Activated T-helper 1 cell treated with anti-CD3 and anti-CD28 coated beads, Interleukin-12 subunit alpha, Interleukin-12 subunit beta, Interleukin-2, Interleukin-4 antibody, amounts not matched to agents 30 ng/mL and 10 ng/mL and 1 ng/mL, durations not matched to agents 14 hours and 24 hours and 36 hours (primary cell): ENCODE measurements at regions of chr3 and their contacts with region 1.

Region 1: DNA sequence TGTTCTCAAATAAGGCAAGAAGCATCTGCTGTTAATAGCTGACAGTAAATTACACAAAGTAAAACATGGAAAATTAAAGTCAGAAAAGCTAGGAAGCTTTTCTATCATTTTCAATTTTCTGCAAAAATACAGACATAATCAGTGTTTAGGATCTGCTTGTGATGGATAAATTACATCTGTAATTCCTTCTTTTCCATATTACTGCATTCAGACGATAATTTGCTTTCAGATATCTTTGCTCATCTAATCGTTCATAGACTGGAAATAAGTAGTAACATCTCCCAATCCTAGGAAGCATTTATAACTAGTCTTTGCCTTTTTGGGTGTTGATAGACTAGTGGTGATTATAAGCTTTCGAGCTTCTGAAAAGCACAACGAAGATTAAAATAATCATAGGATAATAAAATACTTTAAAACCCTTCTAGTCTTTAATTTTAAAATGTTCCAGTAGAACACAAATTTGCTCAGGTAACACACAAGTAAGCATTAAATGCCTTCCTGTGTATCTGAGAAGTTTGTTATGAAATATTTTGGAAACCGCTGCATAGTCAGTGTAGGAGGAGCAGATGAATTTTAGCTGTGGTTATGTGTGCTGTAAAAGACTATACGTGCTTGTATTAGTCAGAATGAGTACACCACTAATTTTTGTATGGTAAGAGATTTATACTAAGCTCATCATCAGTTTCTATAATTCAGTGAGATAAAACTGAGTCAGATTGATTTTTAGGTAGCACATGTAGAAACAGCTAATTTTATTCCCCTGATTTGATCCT is 41.0 kb downstream of the MBNL1 start:
- DNase-seq: no peak
- H3K4me3 Mint-ChIP-seq: no peak overlapping the region
- H3K27ac Mint-ChIP-seq: peak overlapping the region; percentile 78
- H3K4me1 Mint-ChIP-seq: peaks cover 74% of the 10 kb centered on the region
- H3K27me3 Mint-ChIP-seq: no peaks in the 10 kb centered on the region

Region 2: DNA sequence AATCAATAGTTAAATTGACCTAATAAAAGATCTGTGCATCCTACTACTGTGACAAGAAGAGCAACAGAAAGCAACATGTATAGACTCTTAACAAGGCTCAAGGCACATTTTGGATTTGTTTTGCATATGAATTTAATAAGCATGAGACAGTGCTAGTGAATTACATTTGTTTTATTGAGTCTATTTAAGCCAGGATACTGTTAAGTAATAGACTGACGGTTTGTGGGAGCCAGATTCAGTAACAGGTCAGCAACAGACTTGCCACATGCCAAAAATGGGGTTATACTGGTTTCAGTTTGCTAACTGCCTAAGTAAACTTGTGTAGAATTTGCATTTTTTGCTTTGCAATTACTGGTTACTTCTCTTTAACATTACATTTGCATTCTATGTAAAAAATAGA is 13.0 kb after region 1 on chr3:
- intact Hi-C with region 1: loop called (anchors 1 kb)
- DNase-seq: no peak
- H3K4me3 Mint-ChIP-seq: peak overlapping the region; percentile 1
- H3K27ac Mint-ChIP-seq: peak overlapping the region; percentile 34
- H3K4me1 Mint-ChIP-seq: peaks cover 80% of the 10 kb centered on the region
- H3K27me3 Mint-ChIP-seq: no peaks in the 10 kb centered on the region

Region 3: DNA sequence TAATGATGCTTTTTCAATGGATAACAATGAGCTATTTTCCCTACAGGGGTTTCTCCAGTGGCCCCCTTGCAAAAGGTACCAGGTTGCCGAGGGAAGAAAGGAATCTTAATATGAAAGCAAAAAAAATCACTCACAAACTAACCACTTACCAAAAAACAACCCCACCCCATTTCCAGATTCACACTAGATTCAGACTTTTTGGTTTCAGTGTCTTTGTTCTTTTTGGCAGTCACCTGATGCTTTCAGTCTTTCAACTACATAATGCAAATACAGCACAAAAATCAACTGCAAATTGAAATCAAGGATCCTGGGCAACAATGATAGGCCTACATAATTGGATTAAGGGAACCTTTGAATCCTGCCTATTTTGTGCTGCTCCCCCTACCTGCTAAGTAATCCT is 781.3 kb after region 1 on chr3:
- intact Hi-C with region 1: no loop called
- DNase-seq: peak; percentile 4
- H3K4me3 Mint-ChIP-seq: no peak overlapping the region
- H3K27ac Mint-ChIP-seq: no peak overlapping the region
- H3K4me1 Mint-ChIP-seq: peaks cover 15% of the 10 kb centered on the region
- H3K27me3 Mint-ChIP-seq: peaks cover 9% of the 10 kb centered on the region